ENCODE measurements at regions of chr4 and their contacts with region 1.

Region 1: GRCh38 chr4:152408514-152409327 is 127.2 kb downstream of the FBXW7 start:
- DNase-seq: peak; percentile 8
- H3K4me3 ChIP-seq: no peak overlapping the region; a peak in 1 of 4 replicates
- H3K27ac ChIP-seq: no peak overlapping the region
- H3K4me1 ChIP-seq: no peaks in the 10 kb centered on the region; a peak in 1 of 4 replicates
- H3K27me3 ChIP-seq: no peaks in the 10 kb centered on the region
- CTCF ChIP-seq: peak; percentile 73
- EP300 ChIP-seq: no peak
- RAD21 ChIP-seq: peak; percentile 73

Region 2: GRCh38 chr4:152385551-152385950 is 23.2 kb before region 1 on chr4:
- CTCF ChIA-PET with region 1: interaction called, 13 read pairs
- POLR2A ChIA-PET with region 1: no interaction called
- DNase-seq: peak; percentile 2
- H3K4me3 ChIP-seq: no peak overlapping the region; a peak in 1 of 4 replicates
- H3K27ac ChIP-seq: no peak overlapping the region
- H3K4me1 ChIP-seq: no peaks in the 10 kb centered on the region; a peak in 1 of 4 replicates
- H3K27me3 ChIP-seq: no peaks in the 10 kb centered on the region
- CTCF ChIP-seq: peak; percentile 75
- EP300 ChIP-seq: no peak
- RAD21 ChIP-seq: peak; percentile 63

Region 3: DNA sequence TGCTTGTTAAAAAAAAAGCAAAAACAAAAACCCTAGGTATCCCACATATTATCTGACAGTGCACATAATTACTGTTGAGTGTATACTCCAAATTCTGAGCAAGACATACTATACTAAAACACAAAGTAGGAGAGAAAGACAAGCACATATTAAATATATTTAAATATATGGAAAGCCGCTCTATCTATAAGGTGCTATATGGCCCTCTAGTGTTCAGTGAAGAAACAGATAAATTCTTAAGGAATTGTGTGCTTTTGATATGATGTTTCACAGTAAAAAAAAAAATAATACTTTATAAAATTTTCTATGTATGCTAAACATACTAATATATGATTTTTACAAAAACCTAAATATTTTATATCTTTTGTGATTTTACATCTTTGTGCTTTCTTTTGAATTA is 10.7 kb before region 1 on chr4:
- CTCF ChIA-PET with region 1: interaction called, 20 read pairs
- POLR2A ChIA-PET with region 1: interaction called, 3 read pairs
- DNase-seq: peak; percentile 22
- H3K4me3 ChIP-seq: no peak overlapping the region
- H3K27ac ChIP-seq: no peak overlapping the region
- H3K4me1 ChIP-seq: no peaks in the 10 kb centered on the region; a peak in 1 of 4 replicates
- H3K27me3 ChIP-seq: no peaks in the 10 kb centered on the region
- CTCF ChIP-seq: peak; percentile 63
- EP300 ChIP-seq: no peak
- RAD21 ChIP-seq: peak; percentile 59

Region 4: DNA sequence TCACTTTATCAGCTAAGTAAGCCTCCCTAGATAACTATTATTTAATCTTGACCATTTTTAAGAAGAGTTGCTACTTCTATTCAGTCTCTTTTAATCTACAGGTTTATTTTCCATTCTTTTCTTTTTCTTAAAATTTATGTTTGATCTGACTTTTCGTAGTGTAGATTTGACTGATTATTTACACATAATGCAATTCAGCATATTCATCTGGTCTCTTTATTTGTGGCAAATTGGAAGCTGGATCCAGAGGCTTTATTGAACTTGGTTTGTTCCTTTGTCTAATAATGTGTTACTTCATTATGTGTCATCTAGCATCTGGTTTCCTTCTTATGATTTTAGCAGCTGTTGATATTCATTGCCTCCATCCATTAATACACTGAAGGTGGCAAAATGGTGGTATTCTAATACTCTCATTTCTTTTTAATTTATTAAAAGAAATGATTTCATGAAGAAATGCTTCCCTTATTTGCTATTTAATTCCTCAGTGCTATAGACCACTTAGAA is 14.1 kb after region 1 on chr4:
- CTCF ChIA-PET with region 1: interaction called, 30 read pairs
- POLR2A ChIA-PET with region 1: no interaction called
- DNase-seq: no peak
- H3K4me3 ChIP-seq: no peak overlapping the region
- H3K27ac ChIP-seq: no peak overlapping the region
- H3K4me1 ChIP-seq: peaks cover 0 to 5% of the 10 kb centered on the region in 2 experiments; a peak in 3 of 4 replicates
- H3K27me3 ChIP-seq: no peaks in the 10 kb centered on the region
- CTCF ChIP-seq: no peak
- EP300 ChIP-seq: no peak
- RAD21 ChIP-seq: no peak

Region 5: GRCh38 chr4:152563209-152563608 is 154.5 kb after region 1 on chr4:
- CTCF ChIA-PET with region 1: no interaction called
- POLR2A ChIA-PET with region 1: no interaction called
- DNase-seq: no peak
- H3K4me3 ChIP-seq: no peak overlapping the region
- H3K27ac ChIP-seq: no peak overlapping the region
- H3K4me1 ChIP-seq: no peaks in the 10 kb centered on the region
- H3K27me3 ChIP-seq: no peaks in the 10 kb centered on the region
- CTCF ChIP-seq: no peak
- EP300 ChIP-seq: no peak
- RAD21 ChIP-seq: no peak